ENCODE measurements at regions of chr9 and their contacts with region 1.

Region 1: DNA sequence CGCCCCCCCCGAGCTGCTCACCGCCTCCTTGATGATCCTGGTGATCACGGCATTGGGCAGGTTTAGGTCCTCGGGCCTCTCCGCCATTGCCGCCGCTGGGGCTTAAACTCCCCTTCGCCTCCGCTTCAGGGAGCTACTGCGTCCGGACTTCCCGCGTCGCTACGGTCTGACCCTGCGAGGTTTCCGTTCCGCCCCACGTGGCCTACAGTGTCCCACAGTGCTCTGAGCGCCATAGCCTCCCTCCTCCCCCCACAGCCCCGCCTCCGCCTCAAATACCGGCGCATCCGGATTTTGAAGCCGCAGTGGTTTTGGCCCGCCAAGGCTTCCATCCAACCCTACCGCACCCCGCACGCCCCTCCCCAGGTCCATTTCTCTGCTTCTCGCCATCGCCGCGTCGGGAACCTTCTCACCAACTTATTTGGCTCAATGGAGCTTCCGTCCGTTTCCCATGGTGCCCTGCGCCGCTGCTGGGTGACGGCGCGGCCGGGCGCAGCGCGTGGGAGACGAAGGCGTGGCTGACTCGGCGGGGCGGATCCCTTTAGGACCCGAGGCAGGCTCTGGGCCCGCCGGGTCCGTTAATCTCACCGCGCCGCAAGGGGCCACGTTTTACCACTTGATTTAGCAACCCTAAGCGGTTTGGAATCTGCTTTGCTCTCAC is at the starts of genes C9orf43 and POLE3:
- DNase-seq: peak; percentile 94 to 97
- ATAC-seq: peak; percentile 95
- total RNA-seq, gene C9orf43: 0.11 to 0.21 TPM
- total RNA-seq, gene POLE3: 19.5 to 23.3 TPM

Region 2: DNA sequence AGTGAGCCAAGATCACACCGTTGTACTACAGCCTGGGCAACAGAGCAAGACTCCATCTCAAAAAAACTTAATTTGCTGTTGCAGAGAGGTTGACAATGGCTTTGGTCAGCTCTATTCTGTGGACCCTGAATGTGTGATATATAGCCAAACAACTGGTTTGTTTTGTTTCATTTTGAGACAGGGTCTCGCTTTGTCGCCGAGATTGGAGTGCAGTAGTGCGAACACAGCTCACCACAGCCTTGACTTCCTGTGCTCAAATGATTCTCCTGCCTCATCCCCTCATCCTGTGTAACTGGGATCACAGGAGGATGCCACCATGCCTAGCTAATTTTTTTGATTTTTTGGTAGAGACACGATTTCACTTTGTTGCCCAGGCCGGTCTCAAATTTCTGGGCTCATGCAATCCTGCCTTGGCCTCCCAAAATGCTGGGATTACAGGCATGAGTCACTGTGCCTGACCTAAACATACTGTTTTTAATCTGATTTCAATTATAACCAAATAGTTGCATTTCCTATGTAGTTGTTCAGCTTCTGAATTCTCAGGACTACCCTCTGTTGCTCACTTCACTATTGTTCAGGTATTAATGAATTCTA is 117.0 kb before region 1 on chr9:
- intact Hi-C with region 1: no loop called
- DNase-seq: no peak
- ATAC-seq: no peak

Region 3: GRCh38 chr9:113309204-113309813 is 101.0 kb before region 1 on chr9:
- intact Hi-C with region 1: loop called in 1 of 2 experiments (anchors 1 kb)
- DNase-seq: peak in 1 of 2 donors; percentile 31
- ATAC-seq: peak; percentile 82

Region 4: GRCh38 chr9:113737517-113738271 is 327.4 kb after region 1 on chr9:
- intact Hi-C with region 1: no loop called
- DNase-seq: peak in 1 of 2 donors; percentile 46
- ATAC-seq: peak; percentile 51

Measured in left colon (tissue), 2 donors.